ENCODE measurements at regions of chr20 and their contacts with region 1.

Region 1: GRCh38 chr20:35207950-35208611 is 18.4 kb upstream of the MMP24 start:
- DNase-seq: peak; percentile 69
- CTCF ChIP-seq: peak; percentile 65

Region 2: DNA sequence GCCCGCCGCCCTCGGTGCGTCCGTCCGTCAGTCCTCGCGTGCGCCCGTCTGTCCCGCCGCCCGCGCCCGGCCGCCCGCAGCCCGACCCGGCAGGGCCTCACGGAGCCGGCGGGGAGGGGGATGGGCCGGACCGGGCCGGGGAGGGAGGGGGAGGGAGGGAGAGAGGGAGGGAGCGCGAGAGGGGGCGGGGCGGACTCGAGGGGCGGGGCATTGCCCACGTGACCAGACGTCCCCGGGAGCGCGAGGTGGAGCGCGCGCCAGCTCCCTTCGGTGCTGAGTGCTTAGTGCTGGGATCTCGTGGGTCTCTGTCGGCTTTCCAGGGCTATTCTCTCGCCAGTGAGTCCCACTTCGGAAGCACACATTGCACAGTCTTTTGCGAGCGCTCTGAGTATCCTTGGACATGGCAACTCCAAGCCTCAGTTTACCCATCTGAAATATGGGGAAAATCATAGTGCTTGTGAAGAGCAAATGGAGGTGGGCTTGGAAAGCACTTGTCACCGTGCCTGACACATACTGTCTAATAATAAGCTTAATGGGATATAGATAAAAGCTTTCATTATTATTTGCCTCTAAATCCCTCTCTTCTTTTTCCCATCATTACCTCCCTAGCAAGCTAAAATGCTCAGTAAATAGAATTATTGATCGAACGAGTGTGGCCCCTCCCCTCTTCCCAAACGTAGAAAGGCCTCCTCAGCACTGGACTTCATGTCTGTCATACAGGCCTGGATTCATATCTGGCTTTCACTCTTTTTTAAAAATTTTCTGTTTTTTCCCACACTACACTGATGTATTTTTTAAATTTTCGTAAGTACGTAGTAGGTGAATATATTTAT is 382.3 kb before region 1 on chr20 and contains the start of gene NCOA6:
- in situ Hi-C with region 1: loop called (anchors 25 kb)
- DNase-seq: peak; percentile 93
- CTCF ChIP-seq: no peak

Measured in GM13976 (cell line).